Stomach (tissue), 19 donors: ENCODE measurements at regions of chr1 and their contacts with region 1.

Region 1: GRCh38 chr1:33460947-33461629 is 11.4 kb upstream of the ZSCAN20 start:
- DNase-seq: peak in 1 of 2 donors; percentile 51
- H3K4me3 ChIP-seq: no peak overlapping the region
- H3K27ac ChIP-seq: peak overlapping the region in 4 of 5 donors; percentile 46 to 77 (median 58)
- H3K4me1 ChIP-seq: peaks cover 0 to 32% (median 17%) of the 10 kb centered on the region in 4 donors
- H3K27me3 ChIP-seq: no peaks in the 10 kb centered on the region
- CTCF ChIP-seq: no peak
- EP300 ChIP-seq: no peak
- POLR2A ChIP-seq: no peak

Region 2: DNA sequence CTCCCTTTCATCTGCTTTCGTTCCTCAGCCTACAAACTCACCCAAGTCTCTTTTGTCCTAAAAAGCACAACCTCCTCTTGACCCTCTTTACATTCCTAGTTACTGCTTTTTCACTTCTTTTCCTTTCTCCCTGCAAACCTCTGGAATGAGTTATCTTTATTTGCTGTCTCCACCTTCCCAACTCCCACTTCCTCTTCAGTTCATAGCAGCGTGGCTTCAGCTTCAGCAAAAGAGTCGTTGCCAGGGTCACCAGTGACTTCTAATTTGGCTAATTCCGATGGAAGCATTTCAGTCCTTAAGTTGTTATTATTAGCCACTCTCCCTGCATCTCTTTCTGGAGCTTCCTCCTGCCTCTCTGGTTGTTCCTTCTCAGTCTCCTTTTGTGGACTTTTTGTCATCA is 553.6 kb before region 1 on chr1:
- intact Hi-C with region 1: no loop called
- DNase-seq: peak in 1 of 2 donors; percentile 53
- H3K4me3 ChIP-seq: no peak overlapping the region
- H3K27ac ChIP-seq: peak overlapping the region in 2 of 5 donors; percentile 26 to 28
- H3K4me1 ChIP-seq: peaks cover 5 to 26% (median 17%) of the 10 kb centered on the region in 4 donors
- H3K27me3 ChIP-seq: peaks cover 0 to 4% (median 0%) of the 10 kb centered on the region in 3 donors
- CTCF ChIP-seq: no peak
- EP300 ChIP-seq: no peak
- POLR2A ChIP-seq: no peak

Region 3: DNA sequence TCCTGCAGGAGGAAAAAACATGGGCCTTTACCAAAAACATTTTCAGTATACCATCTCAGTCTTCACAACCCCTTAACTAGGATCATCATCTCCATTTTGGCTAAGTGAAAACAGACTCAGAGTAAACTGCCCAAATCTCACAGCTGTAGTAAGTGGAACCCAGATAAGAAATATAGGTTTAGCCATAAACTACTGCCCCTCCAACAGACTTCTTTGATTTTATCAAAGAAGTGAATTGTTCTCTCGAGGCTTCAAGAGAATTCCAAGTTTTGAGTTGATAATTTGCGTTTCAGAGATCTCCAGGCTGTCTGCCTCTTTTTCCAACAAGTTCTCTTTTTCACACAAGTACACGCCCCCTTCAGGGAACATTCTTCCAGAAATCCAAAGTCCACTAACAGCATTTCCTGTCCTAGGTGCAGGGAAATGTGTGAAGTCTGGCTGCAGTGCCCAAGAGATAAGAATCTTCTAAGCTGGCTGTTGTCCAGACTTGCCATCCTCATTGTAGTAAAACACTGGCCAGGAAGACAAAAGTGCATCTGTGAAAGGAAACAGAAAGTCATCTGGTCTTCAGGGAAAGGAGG is 527.3 kb before region 1 on chr1:
- intact Hi-C with region 1: no loop called
- DNase-seq: peak; percentile 40 to 78
- H3K4me3 ChIP-seq: no peak overlapping the region
- H3K27ac ChIP-seq: peak overlapping the region; percentile 27 to 76 (median 59)
- H3K4me1 ChIP-seq: peaks cover 9 to 18% (median 12%) of the 10 kb centered on the region in 4 donors
- H3K27me3 ChIP-seq: no peaks in the 10 kb centered on the region
- CTCF ChIP-seq: no peak
- EP300 ChIP-seq: no peak
- POLR2A ChIP-seq: no peak

Region 4: DNA sequence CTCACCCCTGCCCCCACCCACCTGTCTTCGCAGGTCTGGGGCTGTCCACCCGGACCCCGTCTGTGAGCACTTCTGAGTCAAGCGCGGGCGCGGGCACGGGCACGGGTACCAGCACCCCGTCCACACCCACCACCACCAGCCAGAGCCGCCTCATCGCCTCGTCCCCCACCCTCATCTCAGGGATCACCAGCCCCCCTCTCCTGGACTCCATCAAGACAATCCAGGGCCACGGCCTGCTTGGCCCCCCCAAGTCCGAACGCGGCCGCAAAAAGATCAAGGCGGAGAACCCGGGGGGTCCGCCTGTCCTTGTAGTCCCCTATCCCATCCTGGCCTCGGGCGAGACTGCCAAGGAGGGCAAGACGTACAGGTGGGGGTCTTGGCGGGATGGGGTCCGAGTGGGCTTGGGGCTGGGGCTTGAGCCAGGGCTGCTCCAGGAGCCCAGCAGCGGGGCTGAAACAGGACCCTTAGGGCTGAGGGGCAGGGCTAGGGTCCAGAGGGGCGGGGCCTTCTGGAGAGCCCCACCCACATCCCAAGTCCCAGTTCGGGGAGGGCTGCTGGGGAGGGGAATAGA is 180.9 kb before region 1 on chr1:
- intact Hi-C with region 1: no loop called
- DNase-seq: no peak
- H3K4me3 ChIP-seq: no peak overlapping the region
- H3K27ac ChIP-seq: no peak overlapping the region
- H3K4me1 ChIP-seq: peaks cover 0 to 1% (median 0%) of the 10 kb centered on the region in 4 donors
- H3K27me3 ChIP-seq: no peaks in the 10 kb centered on the region
- CTCF ChIP-seq: no peak
- EP300 ChIP-seq: no peak
- POLR2A ChIP-seq: no peak

Region 5: DNA sequence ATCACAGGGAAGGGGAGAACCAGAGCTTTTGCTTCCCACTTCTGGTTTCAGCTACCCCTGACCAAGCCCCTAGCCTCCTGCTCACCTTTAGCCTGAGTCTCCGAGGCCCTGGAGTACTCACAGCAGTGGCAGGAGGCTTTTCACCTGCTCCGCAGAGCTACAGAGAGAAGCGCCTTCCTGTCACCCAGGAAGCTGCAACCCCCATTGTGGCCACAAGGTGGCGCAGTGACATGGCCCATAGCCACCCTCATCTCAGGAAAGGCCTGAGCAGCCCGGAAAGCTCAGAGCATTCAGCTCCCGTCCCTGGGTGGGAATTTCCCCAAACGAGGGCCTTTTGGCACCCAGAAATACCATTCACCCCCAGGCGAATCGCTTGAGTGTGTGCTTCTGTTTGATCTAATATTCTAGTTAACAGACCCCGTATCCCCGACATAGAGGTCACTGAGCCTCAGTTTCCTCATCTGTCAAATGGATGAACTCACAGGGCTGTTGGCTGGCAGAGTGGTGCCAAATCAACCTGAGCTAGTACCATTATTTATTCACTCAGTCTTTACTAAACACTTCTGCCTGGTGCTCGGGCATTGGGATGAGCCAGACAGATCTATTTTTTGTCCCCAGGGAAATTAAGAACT is 165.5 kb before region 1 on chr1:
- intact Hi-C with region 1: loop called (anchors 10 kb)
- DNase-seq: peak; percentile 93 to 95
- H3K4me3 ChIP-seq: no peak overlapping the region
- H3K27ac ChIP-seq: peak overlapping the region in 3 of 5 donors; percentile 15 to 67 (median 37)
- H3K4me1 ChIP-seq: peaks cover 7 to 47% (median 19%) of the 10 kb centered on the region in 4 donors
- H3K27me3 ChIP-seq: no peaks in the 10 kb centered on the region
- CTCF ChIP-seq: peak in 6 of 7 experiments; percentile 95 to 99 (median 98)
- EP300 ChIP-seq: no peak
- POLR2A ChIP-seq: no peak

Region 6: GRCh38 chr1:33367485-33368405 is 93.3 kb before region 1 on chr1:
- intact Hi-C with region 1: loop called (anchors 10 kb)
- DNase-seq: peak; percentile 92 to 94
- H3K4me3 ChIP-seq: no peak overlapping the region
- H3K27ac ChIP-seq: peak overlapping the region in 4 of 5 donors; percentile 7 to 84 (median 60)
- H3K4me1 ChIP-seq: peaks cover 24 to 57% (median 52%) of the 10 kb centered on the region in 4 donors
- H3K27me3 ChIP-seq: no peaks in the 10 kb centered on the region
- CTCF ChIP-seq: peak in 6 of 7 experiments; percentile 31 to 97 (median 95)
- EP300 ChIP-seq: no peak
- POLR2A ChIP-seq: no peak